ENCODE measurements at regions of chr9 and their contacts with region 1.

Region 1: GRCh38 chr9:92342825-92343488 is 17.2 kb downstream of the CENPP start:
- DNase-seq: no peak
- ATAC-seq: no peak

Region 2: GRCh38 chr9:92476962-92477361 is 134.0 kb after region 1 on chr9:
- intact Hi-C with region 1: no loop called
- DNase-seq: no peak
- ATAC-seq: no peak

Region 3: DNA sequence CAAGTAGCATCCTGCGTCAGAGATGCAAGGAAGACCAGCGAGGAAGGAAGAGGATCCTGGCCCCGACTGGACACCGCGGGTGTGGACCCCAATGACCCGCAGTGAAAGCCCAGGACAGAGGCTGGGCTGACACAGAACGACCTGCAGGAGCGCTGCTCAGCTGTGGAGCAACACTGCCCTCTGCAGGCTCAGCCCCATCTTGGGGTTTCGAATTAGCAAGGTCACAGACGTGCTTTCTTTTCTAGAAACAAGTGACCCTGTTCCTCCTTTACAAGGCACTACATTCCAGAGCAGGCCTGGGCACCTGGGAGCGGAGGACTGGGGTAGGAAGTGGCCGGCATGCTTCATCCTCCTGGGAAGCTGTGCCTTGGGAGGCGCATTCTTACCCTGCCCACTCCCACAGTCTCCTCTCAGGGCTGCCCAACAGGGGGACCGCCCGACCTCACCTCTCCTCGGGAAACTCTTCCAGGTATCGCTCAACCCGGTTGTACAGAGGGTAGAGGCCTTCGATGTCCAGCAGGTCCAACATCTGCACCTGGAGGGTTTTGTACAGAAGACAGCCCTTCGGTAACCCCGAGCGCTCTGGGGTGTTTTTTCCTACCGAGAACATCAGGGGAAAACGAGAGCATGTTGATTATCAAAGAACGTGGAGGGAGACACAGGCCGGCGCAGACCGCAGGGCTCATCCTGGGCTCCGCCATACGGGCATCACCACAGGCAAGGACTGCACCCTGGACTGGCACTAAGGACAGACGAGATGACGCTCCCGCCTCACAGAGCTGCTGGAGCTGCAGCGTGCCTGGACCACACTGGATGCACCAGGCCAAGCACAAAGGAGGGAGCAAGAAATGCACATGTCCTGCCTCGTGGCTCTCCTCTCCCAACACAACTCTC is 292.0 kb after region 1 on chr9:
- intact Hi-C with region 1: loop called in 1 of 2 experiments (anchors 5 kb)
- DNase-seq: peak; percentile 52 to 83
- ATAC-seq: peak; percentile 92

Region 4: GRCh38 chr9:92647671-92648473 is 304.9 kb after region 1 on chr9:
- intact Hi-C with region 1: no loop called
- DNase-seq: no peak
- ATAC-seq: no peak

Measured in left colon (tissue), 2 donors.